AG04449 (cell line): ENCODE measurements at regions of chr20 and their contacts with region 1.

Region 1: GRCh38 chr20:63692669-63693426 is 3.6 kb upstream of the TNFRSF6B start:
- DNase-seq: no peak
- H3K4me3 ChIP-seq: no peak overlapping the region
- CTCF ChIP-seq: no peak

Region 2: GRCh38 chr20:63682384-63683139 is 10.3 kb before region 1 on chr20:
- CTCF ChIA-PET with region 1: no interaction called
- POLR2A ChIA-PET with region 1: interaction called, 12 read pairs
- DNase-seq: peak; percentile 80
- H3K4me3 ChIP-seq: no peak overlapping the region
- CTCF ChIP-seq: no peak

Region 3: GRCh38 chr20:63819224-63819921 is 126.5 kb after region 1 on chr20:
- CTCF ChIA-PET with region 1: no interaction called
- POLR2A ChIA-PET with region 1: no interaction called
- DNase-seq: no peak
- H3K4me3 ChIP-seq: no peak overlapping the region
- CTCF ChIP-seq: peak; percentile 18